CD8-positive, alpha-beta T cell (primary cell): ENCODE measurements at regions of chr19 and their contacts with region 1.

Region 1: DNA sequence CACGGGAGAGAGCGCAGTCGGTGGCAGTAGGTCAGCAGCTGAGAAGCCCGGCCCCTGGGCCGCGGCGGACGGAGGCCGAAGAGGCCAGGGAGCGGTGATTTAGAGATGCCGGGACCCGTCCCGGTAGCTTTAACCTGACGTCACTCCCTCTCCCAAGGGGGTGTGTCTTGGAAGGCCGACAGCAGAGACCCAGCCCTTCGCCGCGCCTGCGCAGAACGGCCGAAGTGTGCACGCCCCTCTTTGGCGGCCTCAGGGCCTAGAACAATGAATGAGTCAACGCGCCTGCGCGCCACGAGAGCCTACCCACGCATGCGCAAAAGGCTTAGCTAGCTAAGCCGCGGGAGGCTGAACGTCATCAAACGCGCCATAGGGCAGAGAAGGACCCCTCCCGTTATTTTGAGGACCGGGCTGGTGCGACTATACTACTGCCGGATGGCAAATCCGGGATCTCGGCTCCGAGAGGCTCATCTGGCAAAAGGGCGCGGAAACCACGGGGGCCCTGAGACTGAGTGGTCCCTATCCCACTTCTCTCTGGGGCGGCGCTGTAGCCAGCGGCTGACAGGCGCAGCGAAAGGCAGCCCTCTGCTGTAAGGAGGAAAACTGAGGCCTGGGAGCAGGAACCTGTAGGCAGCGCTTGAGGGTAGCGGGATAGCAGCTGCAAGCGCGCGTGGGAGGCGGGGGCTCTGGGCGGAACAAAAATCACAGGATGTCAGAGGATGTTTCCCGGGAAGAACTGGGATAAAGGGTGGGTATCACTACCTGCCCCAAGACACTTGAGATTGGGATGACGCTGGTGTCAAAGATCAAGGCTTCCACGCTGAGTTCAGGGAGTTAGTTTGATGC is at the starts of genes IRGQ and ZNF576:
- DNase-seq: peak; percentile 99 to 100 (median 100)
- ATAC-seq: peak; percentile 75
- H3K4me3 ChIP-seq: peak within 1 kb of the TSS; percentile 91 to 100
- H3K4me3 Mint-ChIP-seq: peak within 1 kb of the TSS; percentile 94
- H3K27ac ChIP-seq: peak within 1 kb of the TSS; percentile 96 to 100
- H3K27ac Mint-ChIP-seq: peak within 1 kb of the TSS; percentile 100
- H3K4me1 ChIP-seq: peaks cover 33% of the 10 kb centered on the region
- H3K4me1 Mint-ChIP-seq: peaks cover 30% of the 10 kb centered on the region
- H3K27me3 ChIP-seq: no peaks in the 10 kb centered on the region
- H3K27me3 Mint-ChIP-seq: no peaks in the 10 kb centered on the region
- CTCF ChIP-seq: no peak
- total RNA-seq, gene IRGQ: 25.5 to 26.5 TPM
- total RNA-seq, gene ZNF576: 4.9 to 5.2 TPM

Region 2: GRCh38 chr19:43463381-43464136 is 132.7 kb before region 1 on chr19:
- CTCF ChIA-PET with region 1: interaction called, 3 read pairs
- POLR2A ChIA-PET with region 1: no interaction called
- intact Hi-C with region 1: loop called (anchors 1 kb)
- DNase-seq: peak; percentile 99 to 100 (median 99)
- ATAC-seq: peak; percentile 79
- H3K4me3 ChIP-seq: peak overlapping the region; percentile 75 to 89
- H3K4me3 Mint-ChIP-seq: peak overlapping the region; percentile 93
- H3K27ac ChIP-seq: peak overlapping the region; percentile 85 to 91
- H3K27ac Mint-ChIP-seq: peak overlapping the region; percentile 98
- H3K4me1 ChIP-seq: peaks cover 29% of the 10 kb centered on the region
- H3K4me1 Mint-ChIP-seq: peaks cover 53% of the 10 kb centered on the region
- H3K27me3 ChIP-seq: no peaks in the 10 kb centered on the region
- H3K27me3 Mint-ChIP-seq: no peaks in the 10 kb centered on the region
- CTCF ChIP-seq: no peak

Region 3: GRCh38 chr19:43532962-43533545 is 63.2 kb before region 1 on chr19 and contains the start of gene ZNF575:
- CTCF ChIA-PET with region 1: interaction called, 46 read pairs
- POLR2A ChIA-PET with region 1: interaction called, 12 read pairs
- intact Hi-C with region 1: loop called (anchors 1 kb)
- DNase-seq: peak; percentile 63 to 94 (median 87)
- ATAC-seq: peak; percentile 43
- H3K4me3 ChIP-seq: peak within 1 kb of the TSS; percentile 65 to 79
- H3K4me3 Mint-ChIP-seq: peak within 1 kb of the TSS; percentile 98
- H3K27ac ChIP-seq: peak within 1 kb of the TSS; percentile 55 to 76
- H3K27ac Mint-ChIP-seq: peak within 1 kb of the TSS; percentile 97
- H3K4me1 ChIP-seq: peaks cover 7% of the 10 kb centered on the region
- H3K4me1 Mint-ChIP-seq: peaks cover 19% of the 10 kb centered on the region
- H3K27me3 ChIP-seq: no peaks in the 10 kb centered on the region
- H3K27me3 Mint-ChIP-seq: no peaks in the 10 kb centered on the region
- CTCF ChIP-seq: no peak
- total RNA-seq, gene ZNF575: 2.4 to 3.4 TPM

Region 4: DNA sequence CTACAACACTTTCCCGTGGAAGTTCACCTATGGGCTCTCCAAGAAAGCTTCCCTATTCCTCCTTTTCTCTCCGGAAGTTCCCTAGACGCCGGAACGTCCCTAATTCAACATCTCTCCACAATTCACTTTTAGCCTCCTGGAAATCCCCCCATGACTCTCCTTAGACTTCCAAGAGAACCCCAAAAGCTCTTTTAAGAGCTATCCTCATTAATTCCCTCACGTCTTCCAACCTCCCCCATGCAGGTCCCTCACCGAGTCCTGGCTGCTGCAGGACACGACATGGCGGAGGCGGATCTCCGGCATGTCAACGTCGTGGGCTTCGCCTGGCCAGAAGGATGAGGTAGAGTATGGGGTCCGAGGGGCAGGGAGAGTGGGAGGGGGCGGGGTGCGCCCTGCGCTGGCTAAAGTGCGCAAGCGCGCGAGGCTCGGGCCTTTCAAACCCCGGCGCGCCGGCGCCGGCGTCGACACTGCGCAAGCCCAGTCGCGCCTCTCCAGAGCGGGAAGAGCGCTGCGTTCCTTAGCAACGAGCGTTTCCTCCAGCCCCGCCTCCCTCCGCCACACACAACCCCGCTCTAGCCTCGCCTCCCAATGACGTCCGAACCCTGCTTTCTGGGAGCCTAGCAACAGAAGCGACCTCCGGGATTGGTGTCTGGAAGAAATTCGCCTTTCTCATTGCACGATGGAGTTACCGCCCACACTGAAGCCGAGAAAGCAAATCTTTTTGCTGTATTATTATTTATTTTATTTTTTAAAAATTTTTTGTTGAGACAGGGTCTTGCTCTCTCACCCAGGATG is 20.9 kb before region 1 on chr19 and contains the starts of genes PINLYP and XRCC1:
- CTCF ChIA-PET with region 1: interaction called, 53 read pairs
- POLR2A ChIA-PET with region 1: interaction called, 19 read pairs
- intact Hi-C with region 1: loop called (anchors 1 kb)
- DNase-seq: peak; percentile 93 to 100 (median 95)
- ATAC-seq: peak; percentile 96
- H3K4me3 ChIP-seq: peak within 1 kb of the TSS; percentile 87 to 98
- H3K4me3 Mint-ChIP-seq: peak within 1 kb of the TSS; percentile 95
- H3K27ac ChIP-seq: peak within 1 kb of the TSS; percentile 92 to 97
- H3K27ac Mint-ChIP-seq: peak within 1 kb of the TSS; percentile 96
- H3K4me1 ChIP-seq: peaks cover 29% of the 10 kb centered on the region
- H3K4me1 Mint-ChIP-seq: peaks cover 52% of the 10 kb centered on the region
- H3K27me3 ChIP-seq: no peaks in the 10 kb centered on the region
- H3K27me3 Mint-ChIP-seq: no peaks in the 10 kb centered on the region
- CTCF ChIP-seq: no peak
- total RNA-seq, gene PINLYP: 1.1 TPM
- total RNA-seq, gene XRCC1: 19.8 to 20.7 TPM

Region 5: GRCh38 chr19:43668406-43669158 is 72.4 kb after region 1 on chr19:
- CTCF ChIA-PET with region 1: interaction called, 3 read pairs
- POLR2A ChIA-PET with region 1: interaction called, 4 read pairs
- intact Hi-C with region 1: loop called in 1 of 2 experiments (anchors 1 kb)
- DNase-seq: peak; percentile 85 to 97 (median 91)
- ATAC-seq: peak; percentile 87
- H3K4me3 ChIP-seq: peak overlapping the region; percentile 72 to 73
- H3K4me3 Mint-ChIP-seq: peak overlapping the region; percentile 88
- H3K27ac ChIP-seq: peak overlapping the region; percentile 42 to 43
- H3K27ac Mint-ChIP-seq: peak overlapping the region; percentile 57
- H3K4me1 ChIP-seq: peaks cover 42% of the 10 kb centered on the region
- H3K4me1 Mint-ChIP-seq: peaks cover 43% of the 10 kb centered on the region
- H3K27me3 ChIP-seq: no peaks in the 10 kb centered on the region
- H3K27me3 Mint-ChIP-seq: no peaks in the 10 kb centered on the region
- CTCF ChIP-seq: no peak